ENCODE measurements at regions of chr6 and their contacts with region 1.

Region 1: DNA sequence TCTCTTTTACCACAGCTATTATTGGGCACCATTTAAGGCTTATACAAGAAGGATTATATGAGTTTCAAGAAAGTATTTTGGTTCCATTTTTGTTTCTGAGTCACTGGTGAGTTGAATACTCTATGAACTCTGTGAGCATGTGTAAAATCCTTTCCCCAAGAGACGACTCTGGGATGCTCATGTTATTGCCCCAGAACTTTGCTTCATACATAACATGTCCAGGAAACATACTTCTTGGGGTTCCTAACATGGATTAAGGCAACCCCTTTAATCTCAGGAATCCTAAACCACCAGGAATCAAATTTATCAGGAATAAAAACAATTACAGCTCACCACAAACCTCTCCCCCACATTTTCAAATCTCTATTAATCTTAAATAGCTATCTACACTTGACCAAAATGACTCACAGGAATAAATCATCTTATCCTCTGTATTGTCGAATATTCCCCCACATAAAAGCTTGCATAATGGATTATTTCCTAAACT is 117.5 kb upstream of the COL21A1 start:
- DNase-seq: no peak
- CTCF ChIP-seq: no peak

Region 2: DNA sequence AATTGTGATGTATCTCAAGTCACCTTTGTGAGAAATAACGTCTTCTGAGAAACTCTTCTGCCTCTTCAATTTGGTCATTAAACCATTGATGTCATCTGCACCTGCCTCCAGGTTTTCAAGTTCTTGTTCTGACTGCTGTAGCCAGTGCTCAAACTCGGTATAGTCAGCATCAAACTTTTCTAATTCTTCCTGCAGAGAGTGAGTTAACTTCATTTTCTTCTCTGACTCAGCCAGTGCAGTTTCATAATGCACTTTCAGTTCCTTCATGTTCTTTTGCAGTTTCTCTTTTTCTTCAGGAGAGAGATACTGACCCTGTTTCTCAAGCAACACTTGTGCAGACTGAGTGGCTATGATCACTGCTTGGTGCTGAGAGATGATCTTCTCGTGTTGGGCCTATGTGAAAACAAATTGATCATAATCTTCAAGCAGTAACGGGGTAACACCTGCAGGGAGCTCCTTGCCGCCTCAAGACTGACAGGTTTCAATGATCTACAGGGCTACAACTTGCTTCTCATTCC is 229.0 kb after region 1 on chr6:
- in situ Hi-C with region 1: loop called (anchors 5 kb)
- DNase-seq: peak; percentile 58
- CTCF ChIP-seq: no peak

Measured in GM13976 (cell line).